Mammary epithelial cell (primary cell): ENCODE measurements at regions of chr1 and their contacts with region 1.

Region 1: DNA sequence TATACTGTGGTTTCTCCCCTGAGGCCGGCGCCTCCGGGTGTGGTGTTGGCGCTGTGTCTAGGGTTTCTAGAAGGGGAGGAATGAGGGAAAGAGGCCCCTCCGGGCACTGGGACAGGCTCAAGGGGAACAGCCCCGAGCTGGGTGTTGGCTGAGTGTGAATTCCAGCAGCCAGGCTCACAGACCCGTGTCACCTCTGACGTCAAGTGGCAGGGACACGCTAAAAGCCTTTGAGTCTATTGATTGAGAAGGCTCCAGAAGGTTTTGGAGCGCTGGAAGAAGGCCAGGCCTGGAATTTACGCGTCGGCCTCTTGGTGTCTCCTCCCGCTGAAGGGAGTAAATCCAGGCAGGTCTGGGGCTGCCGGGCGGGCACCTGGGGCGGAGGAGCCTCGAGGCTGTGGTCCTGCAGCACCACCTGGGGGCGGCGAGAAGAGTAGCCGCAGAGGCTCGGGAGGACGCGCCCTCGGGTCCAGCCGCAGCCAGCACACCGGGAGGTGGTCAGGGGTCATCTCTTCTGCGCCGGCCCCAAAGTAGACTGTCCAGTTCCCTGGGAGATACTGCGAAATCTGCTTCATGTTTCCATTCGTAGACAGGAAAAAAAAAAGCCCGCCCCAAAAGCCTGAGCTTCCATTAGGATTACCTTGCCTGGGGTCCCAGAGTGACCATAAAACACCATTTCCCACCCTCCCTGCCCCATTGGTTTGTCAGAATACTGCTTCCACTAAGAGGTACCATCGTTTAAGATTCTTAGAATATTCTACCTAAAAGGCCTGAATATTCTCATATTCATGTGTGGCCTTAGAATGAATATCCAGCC is 61.7 kb downstream of the TLR5 start:
- DNase-seq: peak; percentile 92
- H3K4me3 ChIP-seq: peak overlapping the region in 2 of 3 experiments; percentile 22 to 34
- H3K27ac ChIP-seq: no peak overlapping the region
- H3K4me1 ChIP-seq: peaks cover 3% of the 10 kb centered on the region
- H3K27me3 ChIP-seq: peaks cover 4% of the 10 kb centered on the region
- CTCF ChIP-seq: peak; percentile 65 to 95

Region 2: DNA sequence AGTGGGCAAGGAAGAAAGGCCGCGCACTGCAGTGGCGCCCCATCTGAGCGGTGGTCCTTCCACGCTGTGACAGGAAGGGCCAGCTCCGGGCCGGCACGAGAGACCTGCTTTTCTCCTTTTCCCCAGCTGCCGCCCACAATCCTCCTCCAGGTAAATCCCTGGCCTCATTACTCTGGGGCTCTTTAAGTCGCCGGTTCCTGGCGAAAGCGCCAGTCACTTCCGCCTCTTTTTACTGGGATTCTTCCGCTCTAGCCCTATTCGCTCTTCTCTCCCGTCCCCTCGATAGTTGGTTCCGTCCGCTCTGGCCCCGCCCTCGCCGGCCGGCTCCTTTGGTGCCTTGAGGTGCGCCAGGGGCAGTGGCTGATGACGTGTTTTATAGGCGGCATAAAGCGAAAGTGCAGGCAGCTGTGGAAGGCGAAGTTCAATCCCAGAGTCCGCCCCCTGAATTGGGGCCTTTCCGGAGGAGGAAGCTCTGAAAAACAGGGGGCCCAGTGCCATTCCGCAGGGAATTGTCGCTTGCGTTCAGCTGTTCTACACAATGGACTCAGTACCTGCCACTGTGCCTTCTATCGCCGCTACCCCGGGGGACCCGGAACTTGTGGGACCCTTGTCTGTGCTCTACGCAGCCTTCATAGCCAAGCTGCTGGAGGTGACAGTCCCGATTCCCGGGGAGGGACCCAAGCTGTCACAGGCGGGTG is 437.3 kb before region 1 on chr1:
- CTCF ChIA-PET with region 1: no interaction called
- dilution Hi-C with region 1: no loop called
- in situ Hi-C with region 1: no loop called
- intact Hi-C with region 1: loop called (anchors 10 kb)
- DNase-seq: peak; percentile 99
- H3K4me3 ChIP-seq: peak overlapping the region; percentile 66 to 95 (median 76)
- H3K27ac ChIP-seq: peak overlapping the region; percentile 87
- H3K4me1 ChIP-seq: peaks cover 5% of the 10 kb centered on the region
- H3K27me3 ChIP-seq: no peaks in the 10 kb centered on the region
- CTCF ChIP-seq: no peak

Region 3: DNA sequence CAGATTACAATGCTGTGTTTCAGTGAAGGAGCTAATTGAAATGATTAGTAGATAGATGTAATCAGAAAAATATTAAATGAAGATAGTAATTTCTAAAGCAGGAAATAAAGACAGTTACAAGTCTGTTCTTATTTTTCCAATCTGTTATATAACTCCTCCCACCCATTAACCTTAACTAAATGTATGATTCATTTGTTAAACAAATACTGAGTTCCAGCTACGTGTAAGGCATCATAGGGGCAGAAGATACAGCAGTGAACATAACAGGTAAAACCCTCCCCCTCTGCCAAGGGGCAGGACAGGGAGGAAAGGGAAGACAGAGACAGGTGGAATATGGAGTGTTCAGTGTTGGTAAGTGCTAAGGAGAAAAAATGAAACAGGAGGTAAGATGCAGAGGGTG is 344.4 kb before region 1 on chr1 and contains the start of gene FAM177B:
- CTCF ChIA-PET with region 1: interaction called, 4 read pairs
- dilution Hi-C with region 1: no loop called
- in situ Hi-C with region 1: no loop called
- intact Hi-C with region 1: loop called (anchors 1 kb)
- DNase-seq: peak; percentile 17
- H3K4me3 ChIP-seq: no peak within 1 kb of the TSS
- H3K27ac ChIP-seq: no peak within 1 kb of the TSS
- H3K4me1 ChIP-seq: peaks cover 4% of the 10 kb centered on the region
- H3K27me3 ChIP-seq: no peaks in the 10 kb centered on the region
- CTCF ChIP-seq: no peak
- total RNA-seq, gene FAM177B: not detected

Region 4: GRCh38 chr1:223031733-223032601 is 49.4 kb before region 1 on chr1:
- CTCF ChIA-PET with region 1: no interaction called
- dilution Hi-C with region 1: loop called (anchors 10 kb)
- in situ Hi-C with region 1: no loop called
- intact Hi-C with region 1: no loop called
- DNase-seq: no peak
- H3K4me3 ChIP-seq: no peak overlapping the region
- H3K27ac ChIP-seq: no peak overlapping the region
- H3K4me1 ChIP-seq: no peaks in the 10 kb centered on the region
- H3K27me3 ChIP-seq: no peaks in the 10 kb centered on the region
- CTCF ChIP-seq: no peak

Region 5: GRCh38 chr1:223123011-223123610 is 41.7 kb after region 1 on chr1:
- CTCF ChIA-PET with region 1: no interaction called
- dilution Hi-C with region 1: no loop called
- in situ Hi-C with region 1: no loop called
- intact Hi-C with region 1: loop called (anchors 2 kb)
- DNase-seq: no peak
- H3K4me3 ChIP-seq: peak overlapping the region; percentile 22 to 41 (median 37)
- H3K27ac ChIP-seq: no peak overlapping the region
- H3K4me1 ChIP-seq: no peaks in the 10 kb centered on the region
- H3K27me3 ChIP-seq: no peaks in the 10 kb centered on the region
- CTCF ChIP-seq: no peak

Region 6: GRCh38 chr1:223153177-223154119 is 72.1 kb after region 1 on chr1:
- CTCF ChIA-PET with region 1: no interaction called
- dilution Hi-C with region 1: no loop called
- in situ Hi-C with region 1: no loop called
- intact Hi-C with region 1: no loop called
- DNase-seq: no peak
- H3K4me3 ChIP-seq: no peak overlapping the region
- H3K27ac ChIP-seq: no peak overlapping the region
- H3K4me1 ChIP-seq: no peaks in the 10 kb centered on the region
- H3K27me3 ChIP-seq: no peaks in the 10 kb centered on the region
- CTCF ChIP-seq: no peak

Region 7: GRCh38 chr1:223224465-223224864 is 143.1 kb after region 1 on chr1:
- CTCF ChIA-PET with region 1: no interaction called
- dilution Hi-C with region 1: no loop called
- in situ Hi-C with region 1: no loop called
- intact Hi-C with region 1: no loop called
- DNase-seq: no peak
- H3K4me3 ChIP-seq: no peak overlapping the region
- H3K27ac ChIP-seq: no peak overlapping the region
- H3K4me1 ChIP-seq: peaks cover 6% of the 10 kb centered on the region
- H3K27me3 ChIP-seq: no peaks in the 10 kb centered on the region
- CTCF ChIP-seq: no peak

Region 8: DNA sequence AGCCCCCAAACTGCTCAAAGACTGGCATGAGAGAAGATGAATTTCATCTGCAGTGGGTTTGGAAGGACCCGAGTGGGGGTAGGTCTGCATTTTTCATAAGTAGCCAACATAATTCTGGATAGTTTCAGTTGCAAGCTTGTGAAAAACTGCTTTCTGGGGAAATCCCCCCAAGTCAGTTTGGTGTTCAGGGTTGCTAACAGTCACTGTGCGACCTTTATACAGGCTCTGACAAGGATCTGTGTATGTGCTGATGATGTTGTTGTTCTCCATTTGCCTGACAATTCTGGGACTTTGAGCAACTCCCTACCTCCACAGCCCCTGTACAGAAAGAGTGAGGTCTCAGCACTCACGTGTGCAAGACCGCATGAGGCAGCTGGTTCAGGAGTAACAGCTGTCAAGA is 194.6 kb after region 1 on chr1:
- CTCF ChIA-PET with region 1: no interaction called
- dilution Hi-C with region 1: no loop called
- in situ Hi-C with region 1: no loop called
- intact Hi-C with region 1: no loop called
- DNase-seq: no peak
- H3K4me3 ChIP-seq: no peak overlapping the region
- H3K27ac ChIP-seq: no peak overlapping the region
- H3K4me1 ChIP-seq: no peaks in the 10 kb centered on the region
- H3K27me3 ChIP-seq: no peaks in the 10 kb centered on the region
- CTCF ChIP-seq: no peak

Region 9: DNA sequence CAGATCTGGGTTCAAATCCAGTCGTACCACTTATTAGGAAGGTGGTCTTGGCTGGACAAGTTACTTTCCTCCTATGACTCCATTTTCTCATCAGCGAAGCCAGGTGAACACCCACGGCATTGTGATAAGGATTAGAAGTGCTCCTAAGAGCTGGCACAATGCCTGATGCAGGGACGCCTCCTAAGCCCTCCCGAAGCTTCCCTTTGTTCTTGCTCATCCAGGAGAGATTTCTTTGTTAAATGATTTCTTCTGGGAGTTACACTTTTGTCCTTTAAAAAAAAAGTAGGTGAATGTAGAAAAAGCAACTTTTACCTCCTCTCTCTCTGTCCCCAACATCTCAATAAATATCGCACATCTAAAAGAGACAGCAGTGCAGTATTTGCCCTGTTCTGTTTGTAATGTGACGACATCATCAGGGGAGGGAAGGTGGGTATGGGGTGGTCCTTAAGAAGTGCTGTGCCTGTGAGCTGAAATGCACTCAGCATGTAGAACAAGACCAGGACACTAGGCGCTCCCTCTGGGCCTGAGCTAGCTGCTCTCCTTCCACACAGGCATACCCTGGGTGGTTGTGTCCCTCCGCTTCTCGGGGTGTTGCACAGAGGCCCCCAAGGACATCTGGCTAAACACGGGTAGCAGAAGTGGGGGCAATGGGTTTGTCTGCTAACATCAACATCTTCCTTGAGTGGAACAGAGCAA is 238.7 kb after region 1 on chr1:
- CTCF ChIA-PET with region 1: no interaction called
- dilution Hi-C with region 1: no loop called
- in situ Hi-C with region 1: no loop called
- intact Hi-C with region 1: no loop called
- DNase-seq: no peak
- H3K4me3 ChIP-seq: no peak overlapping the region
- H3K27ac ChIP-seq: no peak overlapping the region
- H3K4me1 ChIP-seq: peaks cover 5% of the 10 kb centered on the region
- H3K27me3 ChIP-seq: no peaks in the 10 kb centered on the region
- CTCF ChIP-seq: no peak